CD14-positive monocyte (primary cell): ENCODE measurements at regions of chr15 and their contacts with region 1.

Region 1: DNA sequence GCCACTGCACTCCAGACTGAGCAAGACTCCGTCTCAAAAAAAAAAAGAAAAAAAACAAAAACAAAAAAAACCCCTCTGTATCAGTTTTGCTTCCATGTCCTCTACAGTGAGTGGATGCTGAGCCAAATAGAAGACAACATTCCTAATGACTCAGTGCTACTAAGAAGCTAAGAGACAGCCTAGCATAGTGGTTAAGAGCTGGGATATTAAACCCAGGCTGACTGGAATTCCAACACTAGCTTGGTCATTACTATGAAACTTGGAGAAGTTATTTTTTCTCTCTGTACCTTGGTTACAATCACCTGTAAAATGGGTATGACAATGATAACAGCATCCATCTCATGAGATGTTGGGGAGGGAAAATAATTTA is 60.9 kb upstream of the PYGO1 start:
- DNase-seq: no peak
- H3K4me3 ChIP-seq: no peak overlapping the region
- H3K4me3 Mint-ChIP-seq: no peak overlapping the region
- H3K27ac ChIP-seq: no peak overlapping the region
- H3K27ac Mint-ChIP-seq: no peak overlapping the region
- H3K4me1 ChIP-seq: no peaks in the 10 kb centered on the region
- H3K4me1 Mint-ChIP-seq: no peaks in the 10 kb centered on the region
- H3K27me3 ChIP-seq: no peaks in the 10 kb centered on the region
- H3K27me3 Mint-ChIP-seq: no peaks in the 10 kb centered on the region
- CTCF ChIP-seq: no peak

Region 2: GRCh38 chr15:55846116-55846707 is 197.2 kb after region 1 on chr15:
- intact Hi-C with region 1: loop called in 1 of 2 experiments (anchors 5 kb)
- DNase-seq: peak; percentile 21 to 51 (median 37)
- H3K4me3 ChIP-seq: no peak overlapping the region
- H3K4me3 Mint-ChIP-seq: no peak overlapping the region
- H3K27ac ChIP-seq: no peak overlapping the region
- H3K27ac Mint-ChIP-seq: no peak overlapping the region
- H3K4me1 ChIP-seq: no peaks in the 10 kb centered on the region
- H3K4me1 Mint-ChIP-seq: no peaks in the 10 kb centered on the region
- H3K27me3 ChIP-seq: no peaks in the 10 kb centered on the region
- H3K27me3 Mint-ChIP-seq: peaks cover 0 to 1% (median 0%) of the 10 kb centered on the region in 3 donors
- CTCF ChIP-seq: peak; percentile 94